B cell (primary cell): ENCODE measurements at regions of chr13 and their contacts with region 1.

Region 1: GRCh38 chr13:20902438-20903163 is at the start of gene XPO4:
- DNase-seq: peak; percentile 89
- ATAC-seq: peak; percentile 91
- H3K4me3 ChIP-seq: peak within 1 kb of the TSS; percentile 62 to 98 (median 96)
- H3K4me3 Mint-ChIP-seq: peak within 1 kb of the TSS; percentile 94
- H3K27ac ChIP-seq: peak within 1 kb of the TSS; percentile 91 to 97
- H3K27ac Mint-ChIP-seq: peak within 1 kb of the TSS; percentile 94
- H3K4me1 ChIP-seq: peaks cover 10 to 11% of the 10 kb centered on the region in 2 donors
- H3K4me1 Mint-ChIP-seq: peaks cover 30% of the 10 kb centered on the region
- H3K27me3 ChIP-seq: no peaks in the 10 kb centered on the region
- H3K27me3 Mint-ChIP-seq: no peaks in the 10 kb centered on the region
- CTCF ChIP-seq: no peak
- total RNA-seq, gene XPO4: 25.9 and 30.6 TPM in 2 replicates

Region 2: GRCh38 chr13:20703780-20704445 is 198.7 kb before region 1 on chr13:
- CTCF ChIA-PET with region 1: no interaction called
- POLR2A ChIA-PET with region 1: interaction called, 6 read pairs
- intact Hi-C with region 1: loop called (anchors 5 kb)
- DNase-seq: peak; percentile 88
- ATAC-seq: peak; percentile 88
- H3K4me3 ChIP-seq: peak overlapping the region in 3 of 5 experiments; percentile 15 to 40 (median 29)
- H3K4me3 Mint-ChIP-seq: peak overlapping the region; percentile 52
- H3K27ac ChIP-seq: no peak overlapping the region
- H3K27ac Mint-ChIP-seq: no peak overlapping the region
- H3K4me1 ChIP-seq: peaks cover 11 to 12% of the 10 kb centered on the region in 2 donors
- H3K4me1 Mint-ChIP-seq: peaks cover 12% of the 10 kb centered on the region
- H3K27me3 ChIP-seq: peaks cover 0 to 27% (median 18%) of the 10 kb centered on the region in 4 experiments
- H3K27me3 Mint-ChIP-seq: peaks cover 16% of the 10 kb centered on the region
- CTCF ChIP-seq: peak; percentile 43

Region 3: DNA sequence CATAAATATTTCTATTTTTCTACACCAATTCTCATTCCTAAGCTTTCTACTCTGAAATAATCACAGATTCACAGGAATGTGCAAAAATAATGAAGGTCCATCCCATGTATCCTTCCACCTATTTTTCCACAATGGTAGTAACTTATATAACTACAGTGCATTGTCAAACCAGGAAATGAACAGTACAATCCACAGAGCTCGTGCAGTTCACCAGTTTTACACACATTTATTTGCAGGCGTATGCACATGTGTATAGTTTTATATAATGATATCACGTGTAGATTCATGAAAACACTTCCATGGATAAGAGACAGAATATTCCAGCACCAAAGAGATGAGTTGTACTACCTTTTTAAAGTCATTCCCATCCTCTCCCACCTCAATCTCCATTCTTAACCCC is 141.7 kb before region 1 on chr13:
- CTCF ChIA-PET with region 1: no interaction called
- POLR2A ChIA-PET with region 1: no interaction called
- intact Hi-C with region 1: no loop called
- DNase-seq: no peak
- ATAC-seq: no peak
- H3K4me3 ChIP-seq: no peak overlapping the region
- H3K4me3 Mint-ChIP-seq: no peak overlapping the region
- H3K27ac ChIP-seq: no peak overlapping the region
- H3K27ac Mint-ChIP-seq: no peak overlapping the region
- H3K4me1 ChIP-seq: no peaks in the 10 kb centered on the region
- H3K4me1 Mint-ChIP-seq: no peaks in the 10 kb centered on the region
- H3K27me3 ChIP-seq: no peaks in the 10 kb centered on the region
- H3K27me3 Mint-ChIP-seq: no peaks in the 10 kb centered on the region
- CTCF ChIP-seq: no peak

Region 4: DNA sequence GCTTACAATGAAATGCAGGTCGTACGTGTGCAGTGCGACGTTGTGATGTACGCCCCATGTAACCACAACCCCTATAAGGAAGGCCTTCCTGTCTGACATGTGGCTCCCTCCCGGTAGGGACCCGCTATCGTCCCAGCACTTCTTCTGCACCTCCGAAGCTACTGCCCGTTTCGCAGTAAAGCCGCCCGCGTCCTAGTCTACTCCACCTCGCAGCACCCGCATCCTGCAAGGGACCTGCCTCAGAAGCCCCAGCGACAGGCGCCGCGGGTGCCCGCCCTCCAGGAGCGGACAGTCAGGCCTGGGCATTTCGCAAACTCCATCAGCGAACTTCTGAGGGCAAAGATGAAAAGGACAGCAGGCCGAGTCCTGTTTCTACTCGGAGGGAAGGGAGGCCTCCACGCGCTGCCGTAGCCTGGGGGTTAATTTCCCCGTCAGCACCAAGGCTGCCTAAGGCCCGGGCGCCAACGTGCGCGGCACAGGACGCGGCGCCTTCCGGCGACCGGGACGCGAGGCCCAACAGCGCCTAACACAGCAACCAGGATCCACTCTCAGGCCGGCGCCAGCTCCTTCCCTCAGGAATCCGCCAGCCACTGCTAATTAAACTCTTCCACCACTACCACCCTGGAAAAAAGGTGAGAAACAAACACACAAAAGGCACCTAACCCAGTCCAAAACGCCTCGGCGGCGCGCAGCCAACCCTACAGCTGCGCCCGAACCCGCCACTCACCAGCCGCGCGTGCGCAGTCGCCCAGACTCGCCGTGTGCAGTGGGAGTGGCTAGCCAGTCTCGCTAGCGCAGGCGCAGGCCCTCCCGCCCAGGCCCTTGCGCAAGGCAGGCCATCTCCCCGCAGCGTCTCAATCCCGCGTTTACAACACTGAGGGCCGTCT is 129.2 kb before region 1 on chr13 and contains the start of gene EEF1AKMT1:
- CTCF ChIA-PET with region 1: no interaction called
- POLR2A ChIA-PET with region 1: no interaction called
- intact Hi-C with region 1: loop called (anchors 10 kb)
- DNase-seq: peak; percentile 94
- ATAC-seq: peak; percentile 95
- H3K4me3 ChIP-seq: peak within 1 kb of the TSS; percentile 53 to 80 (median 66)
- H3K4me3 Mint-ChIP-seq: peak within 1 kb of the TSS; percentile 96
- H3K27ac ChIP-seq: peak within 1 kb of the TSS; percentile 77 to 88
- H3K27ac Mint-ChIP-seq: peak within 1 kb of the TSS; percentile 100
- H3K4me1 ChIP-seq: peaks cover 7 to 15% of the 10 kb centered on the region in 2 donors
- H3K4me1 Mint-ChIP-seq: peaks cover 16% of the 10 kb centered on the region
- H3K27me3 ChIP-seq: no peaks in the 10 kb centered on the region
- H3K27me3 Mint-ChIP-seq: no peaks in the 10 kb centered on the region
- CTCF ChIP-seq: no peak
- total RNA-seq, gene EEF1AKMT1: 4.1 and 4.9 TPM in 2 replicates

Region 5: GRCh38 chr13:21176220-21176982 is 273.8 kb after region 1 on chr13 and contains the starts of genes MRPL57 and SKA3:
- CTCF ChIA-PET with region 1: no interaction called
- POLR2A ChIA-PET with region 1: no interaction called
- intact Hi-C with region 1: loop called (anchors 1 kb)
- DNase-seq: peak; percentile 95
- ATAC-seq: peak; percentile 93
- H3K4me3 ChIP-seq: peak within 1 kb of the TSS; percentile 67 to 97 (median 94)
- H3K4me3 Mint-ChIP-seq: peak within 1 kb of the TSS; percentile 98
- H3K27ac ChIP-seq: peak within 1 kb of the TSS; percentile 82 to 85
- H3K27ac Mint-ChIP-seq: peak within 1 kb of the TSS; percentile 97
- H3K4me1 ChIP-seq: peaks cover 11 to 15% of the 10 kb centered on the region in 2 donors
- H3K4me1 Mint-ChIP-seq: peaks cover 15% of the 10 kb centered on the region
- H3K27me3 ChIP-seq: no peaks in the 10 kb centered on the region
- H3K27me3 Mint-ChIP-seq: no peaks in the 10 kb centered on the region
- CTCF ChIP-seq: peak; percentile 22
- total RNA-seq, gene MRPL57: 9.7 and 12.1 TPM in 2 replicates
- total RNA-seq, gene SKA3: 0.20 and 0.53 TPM in 2 replicates

Region 6: GRCh38 chr13:21297914-21298831 is 395.6 kb after region 1 on chr13:
- CTCF ChIA-PET with region 1: no interaction called
- POLR2A ChIA-PET with region 1: no interaction called
- intact Hi-C with region 1: loop called (anchors 1 kb)
- DNase-seq: peak; percentile 93
- ATAC-seq: peak; percentile 96
- H3K4me3 ChIP-seq: peak overlapping the region; percentile 8 to 88 (median 75)
- H3K4me3 Mint-ChIP-seq: peak overlapping the region; percentile 89
- H3K27ac ChIP-seq: peak overlapping the region; percentile 7 to 77
- H3K27ac Mint-ChIP-seq: peak overlapping the region; percentile 89
- H3K4me1 ChIP-seq: peaks cover 15 to 18% of the 10 kb centered on the region in 2 donors
- H3K4me1 Mint-ChIP-seq: peaks cover 17% of the 10 kb centered on the region
- H3K27me3 ChIP-seq: no peaks in the 10 kb centered on the region
- H3K27me3 Mint-ChIP-seq: no peaks in the 10 kb centered on the region
- CTCF ChIP-seq: peak; percentile 93

Region 7: GRCh38 chr13:21603531-21604448 is 701.2 kb after region 1 on chr13 and contains the start of gene MICU2:
- CTCF ChIA-PET with region 1: no interaction called
- POLR2A ChIA-PET with region 1: no interaction called
- intact Hi-C with region 1: loop called (anchors 10 kb)
- DNase-seq: peak; percentile 98
- ATAC-seq: peak; percentile 93
- H3K4me3 ChIP-seq: peak within 1 kb of the TSS; percentile 59 to 92 (median 75)
- H3K4me3 Mint-ChIP-seq: peak within 1 kb of the TSS; percentile 95
- H3K27ac ChIP-seq: peak within 1 kb of the TSS; percentile 80 to 98
- H3K27ac Mint-ChIP-seq: peak within 1 kb of the TSS; percentile 98
- H3K4me1 ChIP-seq: peaks cover 17 to 21% of the 10 kb centered on the region in 2 donors
- H3K4me1 Mint-ChIP-seq: peaks cover 35% of the 10 kb centered on the region
- H3K27me3 ChIP-seq: peaks cover 2 to 12% (median 3%) of the 10 kb centered on the region in 4 experiments
- H3K27me3 Mint-ChIP-seq: peaks cover 29% of the 10 kb centered on the region
- CTCF ChIP-seq: no peak
- total RNA-seq, gene MICU2: 52.2 and 52.5 TPM in 2 replicates